MCF 10A (cell line): ENCODE measurements at regions of chr7 and their contacts with region 1.

Region 1: GRCh38 chr7:85829817-85830432 is 643.1 kb upstream of the SEMA3D start:
- DNase-seq: peak; percentile 12
- H3K4me3 Mint-ChIP-seq: no peak overlapping the region
- H3K27ac Mint-ChIP-seq: no peak overlapping the region
- H3K4me1 Mint-ChIP-seq: no peaks in the 10 kb centered on the region
- H3K27me3 Mint-ChIP-seq: peaks cover 58% of the 10 kb centered on the region
- CTCF ChIP-seq: peak; percentile 38

Region 2: GRCh38 chr7:85030893-85031292 is 799.0 kb before region 1 on chr7:
- CTCF ChIA-PET with region 1: interaction called, 12 read pairs
- POLR2A ChIA-PET with region 1: interaction called, 3 read pairs
- intact Hi-C with region 1: loop called (anchors 2 kb)
- DNase-seq: peak; percentile 35
- H3K4me3 Mint-ChIP-seq: no peak overlapping the region
- H3K27ac Mint-ChIP-seq: no peak overlapping the region
- H3K4me1 Mint-ChIP-seq: peaks cover 6% of the 10 kb centered on the region
- H3K27me3 Mint-ChIP-seq: peaks cover 50% of the 10 kb centered on the region
- CTCF ChIP-seq: peak; percentile 39

Region 3: DNA sequence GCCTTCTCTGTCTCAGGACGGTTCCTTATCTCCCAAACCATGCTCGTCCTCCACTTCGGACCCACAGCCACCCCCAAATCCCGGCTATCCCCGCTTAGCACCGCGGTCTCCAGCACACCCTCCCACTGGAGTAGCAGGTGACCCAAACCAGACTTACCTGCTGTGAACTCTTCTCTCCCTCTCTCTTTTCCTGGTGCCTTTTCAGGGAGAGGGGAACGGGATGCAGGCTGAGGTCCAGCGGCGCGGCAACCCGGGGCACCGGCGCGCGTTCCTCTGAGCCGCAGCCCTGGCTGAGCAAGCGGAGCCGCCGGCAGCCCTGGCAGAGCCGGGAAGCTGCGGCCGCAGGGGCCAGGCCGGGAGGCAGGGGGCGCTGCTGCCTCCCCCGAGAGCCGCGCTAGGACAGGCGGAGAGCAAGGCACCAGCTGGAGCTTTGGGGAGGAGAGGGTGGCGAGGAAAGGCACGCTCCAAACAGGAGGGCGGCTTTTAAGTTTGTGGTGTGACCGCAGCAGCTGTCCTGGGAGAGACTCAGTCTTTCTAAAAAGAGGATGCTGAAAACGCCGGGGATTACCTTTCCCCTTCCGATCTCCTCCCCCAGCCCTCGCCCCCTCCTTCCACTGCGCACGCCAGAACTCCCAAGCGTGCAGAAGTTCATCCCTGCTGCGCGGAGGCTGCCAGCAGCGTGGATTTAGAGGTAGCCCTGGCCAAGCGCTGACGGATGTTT is 643.2 kb before region 1 on chr7 and contains the start of gene SEMA3D:
- CTCF ChIA-PET with region 1: no interaction called
- POLR2A ChIA-PET with region 1: no interaction called
- intact Hi-C with region 1: loop called (anchors 10 kb)
- DNase-seq: peak; percentile 47
- H3K4me3 Mint-ChIP-seq: peak within 1 kb of the TSS; percentile 50
- H3K27ac Mint-ChIP-seq: no peak within 1 kb of the TSS
- H3K4me1 Mint-ChIP-seq: peaks cover 10% of the 10 kb centered on the region
- H3K27me3 Mint-ChIP-seq: peaks cover 84% of the 10 kb centered on the region
- CTCF ChIP-seq: peak; percentile 59
- total RNA-seq, gene SEMA3D: not detected in 2 replicates

Region 4: DNA sequence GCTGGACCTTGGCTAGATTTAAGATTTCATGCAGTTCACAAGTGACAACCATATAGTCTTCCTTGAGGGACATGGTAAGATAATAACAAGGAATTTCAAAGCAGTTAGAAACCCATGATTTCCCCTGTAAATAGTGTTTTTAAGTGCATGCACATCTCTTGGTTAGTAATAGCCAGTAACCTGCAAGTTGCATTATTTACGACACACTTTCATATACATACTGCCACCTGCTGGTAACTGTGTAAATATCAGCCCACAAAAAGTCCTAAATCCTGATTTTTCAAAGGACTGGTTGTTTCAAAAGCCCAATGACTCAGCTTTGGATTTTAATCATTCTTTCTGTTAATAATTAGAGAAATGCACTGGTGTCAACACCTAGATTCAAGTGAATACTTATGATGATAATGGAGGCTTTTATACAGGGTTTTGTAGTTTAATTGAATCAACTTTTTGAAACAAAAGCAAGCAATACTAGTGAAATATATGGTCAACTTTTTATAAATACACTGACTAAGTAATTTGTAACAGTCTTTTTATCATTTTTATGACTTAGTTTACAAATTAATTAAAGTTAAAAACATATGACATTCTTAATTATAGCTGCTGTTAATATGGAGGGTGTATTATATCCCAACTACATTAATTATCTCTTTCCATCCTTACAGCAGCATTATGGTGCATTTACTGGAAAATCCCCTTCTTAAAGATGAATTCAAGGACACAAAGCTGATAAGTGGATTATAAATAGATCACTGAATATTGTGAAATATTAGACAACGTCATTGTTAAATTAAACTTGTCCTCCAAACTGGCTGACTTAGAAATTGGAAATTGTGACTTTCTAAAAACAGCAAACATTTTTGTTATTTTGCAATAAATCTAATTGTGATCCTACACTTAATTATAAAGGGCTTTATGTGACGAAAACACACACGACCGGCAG is 275.4 kb before region 1 on chr7:
- CTCF ChIA-PET with region 1: interaction called, 4 read pairs
- POLR2A ChIA-PET with region 1: no interaction called
- intact Hi-C with region 1: loop called (anchors 10 kb)
- DNase-seq: peak; percentile 54
- H3K4me3 Mint-ChIP-seq: no peak overlapping the region
- H3K27ac Mint-ChIP-seq: no peak overlapping the region
- H3K4me1 Mint-ChIP-seq: no peaks in the 10 kb centered on the region
- H3K27me3 Mint-ChIP-seq: peaks cover 52% of the 10 kb centered on the region
- CTCF ChIP-seq: peak; percentile 78

Region 5: DNA sequence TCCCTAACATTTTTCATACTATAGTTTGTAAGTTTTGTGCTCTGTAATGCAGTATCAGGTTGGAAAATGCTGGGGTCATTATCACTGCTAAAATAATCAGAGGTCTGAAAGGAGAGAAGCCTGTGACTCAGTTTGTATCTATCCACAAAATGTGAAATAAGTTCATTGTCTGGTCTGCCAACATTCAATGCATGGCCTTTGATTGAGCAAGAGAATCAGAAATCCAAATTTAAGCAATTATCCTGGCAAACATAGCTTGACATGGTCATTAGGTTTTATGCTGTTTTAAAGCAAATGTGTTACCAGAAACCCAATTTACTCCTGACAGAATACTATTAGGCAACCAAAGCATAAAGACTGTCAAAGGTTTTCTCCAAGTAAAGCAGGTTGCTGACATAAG is 66.6 kb after region 1 on chr7:
- CTCF ChIA-PET with region 1: no interaction called
- POLR2A ChIA-PET with region 1: no interaction called
- intact Hi-C with region 1: no loop called
- DNase-seq: no peak
- H3K4me3 Mint-ChIP-seq: no peak overlapping the region
- H3K27ac Mint-ChIP-seq: no peak overlapping the region
- H3K4me1 Mint-ChIP-seq: no peaks in the 10 kb centered on the region
- H3K27me3 Mint-ChIP-seq: peaks cover 78% of the 10 kb centered on the region
- CTCF ChIP-seq: no peak